A549 (cell line): ENCODE measurements at regions of chr10 and their contacts with region 1.

Region 1: GRCh38 chr10:101012525-101013364 is 13.1 kb downstream of the LZTS2 start:
- DNase-seq: peak; percentile 94 to 97
- ATAC-seq: peak; percentile 78 to 90
- H3K4me3 ChIP-seq: no peak overlapping the region
- H3K27ac ChIP-seq: peak overlapping the region; percentile 15 to 70; a peak in 5 of 6 replicates
- H3K4me1 ChIP-seq: peaks cover 32% of the 10 kb centered on the region
- CTCF ChIP-seq: peak; percentile 95
- EP300 ChIP-seq: no peak
- POLR2A ChIP-seq: no peak
- RAD21 ChIP-seq: peak; percentile 54 to 67

Region 2: DNA sequence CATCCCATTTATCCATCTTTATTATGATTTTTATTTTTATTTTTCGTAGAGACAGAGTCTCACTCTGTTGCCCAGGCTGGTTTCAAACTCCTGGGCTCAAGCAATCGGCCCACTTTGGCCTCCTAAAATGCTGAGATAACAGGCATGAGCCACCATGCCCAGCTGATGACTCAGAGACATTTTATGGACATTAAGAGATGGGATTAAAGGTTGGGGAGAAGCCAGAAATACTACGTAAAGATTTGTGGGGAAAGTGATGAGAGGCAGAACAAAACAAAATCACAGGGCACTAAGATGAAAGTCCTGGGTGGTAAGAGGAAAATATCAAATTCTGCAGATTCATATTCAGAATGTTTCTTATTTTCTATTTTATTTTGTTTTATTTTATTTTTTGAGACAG is 542.4 kb before region 1 on chr10:
- CTCF ChIA-PET with region 1: no interaction called
- POLR2A ChIA-PET with region 1: no interaction called
- DNase-seq: no peak
- ATAC-seq: no peak
- H3K4me3 ChIP-seq: no peak overlapping the region
- H3K27ac ChIP-seq: no peak overlapping the region
- H3K4me1 ChIP-seq: no peaks in the 10 kb centered on the region
- CTCF ChIP-seq: no peak
- EP300 ChIP-seq: no peak
- POLR2A ChIP-seq: no peak
- RAD21 ChIP-seq: no peak

Region 3: GRCh38 chr10:100544950-100545349 is 467.8 kb before region 1 on chr10:
- CTCF ChIA-PET with region 1: no interaction called
- POLR2A ChIA-PET with region 1: no interaction called
- DNase-seq: no peak
- ATAC-seq: no peak
- H3K4me3 ChIP-seq: no peak overlapping the region
- H3K27ac ChIP-seq: no peak overlapping the region
- H3K4me1 ChIP-seq: no peaks in the 10 kb centered on the region
- CTCF ChIP-seq: no peak
- EP300 ChIP-seq: no peak
- POLR2A ChIP-seq: no peak
- RAD21 ChIP-seq: no peak

Region 4: GRCh38 chr10:100807241-100807951 is 205.3 kb before region 1 on chr10:
- CTCF ChIA-PET with region 1: no interaction called
- POLR2A ChIA-PET with region 1: no interaction called
- DNase-seq: no peak
- ATAC-seq: no peak
- H3K4me3 ChIP-seq: no peak overlapping the region
- H3K27ac ChIP-seq: no peak overlapping the region
- H3K4me1 ChIP-seq: no peaks in the 10 kb centered on the region
- CTCF ChIP-seq: no peak
- EP300 ChIP-seq: no peak
- POLR2A ChIP-seq: no peak
- RAD21 ChIP-seq: no peak

Region 5: GRCh38 chr10:100969187-100970075 is 43.3 kb before region 1 on chr10 and contains the start of gene SEMA4G:
- CTCF ChIA-PET with region 1: interaction called, 22 read pairs
- POLR2A ChIA-PET with region 1: no interaction called
- DNase-seq: peak; percentile 44 to 79
- ATAC-seq: peak; percentile 58 to 88
- H3K4me3 ChIP-seq: peak within 1 kb of the TSS; percentile 84
- H3K27ac ChIP-seq: peak within 1 kb of the TSS; percentile 70 to 88
- H3K4me1 ChIP-seq: peaks cover 34% of the 10 kb centered on the region
- CTCF ChIP-seq: peak; percentile 60
- EP300 ChIP-seq: no peak
- POLR2A ChIP-seq: no peak; the same call in 1 of the 2 replicates
- RAD21 ChIP-seq: peak in 1 of 2 experiments; percentile 23; a peak in 1 of 5 replicates
- polyA plus RNA-seq, gene SEMA4G: 17.4 and 31.1 TPM in 2 replicates

Region 6: GRCh38 chr10:101031128-101031795 is 18.5 kb after region 1 on chr10 and contains the starts of genes PDZD7 and SFXN3:
- CTCF ChIA-PET with region 1: interaction called, 373 read pairs
- POLR2A ChIA-PET with region 1: interaction called, 5 read pairs
- DNase-seq: peak; percentile 92 to 95
- ATAC-seq: peak; percentile 80 to 93
- H3K4me3 ChIP-seq: peak within 1 kb of the TSS; percentile 77
- H3K27ac ChIP-seq: peak within 1 kb of the TSS; percentile 75 to 92
- H3K4me1 ChIP-seq: peaks cover 27% of the 10 kb centered on the region
- CTCF ChIP-seq: no peak
- EP300 ChIP-seq: no peak
- POLR2A ChIP-seq: peak; percentile 27
- RAD21 ChIP-seq: no peak
- polyA plus RNA-seq, gene PDZD7: 0.20 and 0.21 TPM in 2 replicates
- polyA plus RNA-seq, gene SFXN3: 33.7 and 42.1 TPM in 2 replicates